ENCODE measurements at regions of chr13 and their contacts with region 1.

Region 1: DNA sequence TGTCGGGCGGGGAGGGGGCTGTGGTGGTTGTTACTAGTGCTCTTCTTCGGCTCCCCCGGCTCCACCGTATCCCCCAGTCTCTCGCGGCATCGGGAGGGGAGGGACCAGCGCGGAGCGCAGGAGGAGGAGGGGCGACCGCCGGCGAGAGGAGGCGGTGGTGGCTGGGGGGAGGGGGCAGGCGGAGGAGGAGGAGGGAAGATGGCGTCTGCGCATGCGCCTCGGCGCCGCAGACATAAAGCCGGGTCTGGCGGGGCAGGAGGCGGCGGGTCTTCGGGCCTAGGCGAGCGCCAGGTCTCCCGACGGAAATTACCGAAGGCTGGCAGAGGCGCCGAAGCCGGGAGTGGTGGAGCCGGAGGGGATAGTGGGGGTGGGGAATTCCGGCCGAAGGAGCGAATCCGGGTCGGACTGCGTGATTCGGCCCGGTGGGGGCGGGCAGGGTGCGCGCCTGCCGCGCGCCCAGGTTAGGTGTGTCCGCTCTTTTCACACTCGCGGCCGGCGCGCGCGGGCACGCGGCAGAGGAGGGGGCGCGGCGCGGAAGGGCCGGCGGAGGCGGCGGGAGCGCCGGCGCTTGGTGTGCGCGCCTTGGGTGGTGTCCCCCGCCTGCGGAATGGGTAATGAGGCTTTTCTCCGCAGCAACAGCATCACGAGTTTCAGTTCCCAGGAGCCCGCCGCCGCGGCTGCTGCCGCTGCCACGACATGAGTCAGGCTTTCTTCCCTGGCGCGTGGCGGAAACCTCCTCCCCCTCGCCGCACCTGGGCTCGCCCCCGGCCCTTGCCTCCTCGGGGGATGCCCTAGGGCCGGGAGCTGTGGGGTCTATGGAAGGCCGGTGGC is 1.3 kb upstream of the TSC22D1 start:
- DNase-seq: peak; percentile 91 to 95 (median 94)
- ATAC-seq: peak; percentile 85
- H3K4me3 ChIP-seq: peak overlapping the region; percentile 66
- H3K4me3 Mint-ChIP-seq: peak overlapping the region; percentile 78 to 99 (median 93)
- H3K27ac ChIP-seq: peak overlapping the region; percentile 84
- H3K27ac Mint-ChIP-seq: peak overlapping the region; percentile 74 to 95 (median 93)
- H3K4me1 ChIP-seq: peaks cover 16 to 27% of the 10 kb centered on the region in 2 donors
- H3K4me1 Mint-ChIP-seq: peaks cover 31 to 40% (median 38%) of the 10 kb centered on the region in 7 donors
- H3K27me3 ChIP-seq: no peaks in the 10 kb centered on the region
- H3K27me3 Mint-ChIP-seq: peaks cover 0 to 56% (median 0%) of the 10 kb centered on the region in 5 donors

Region 2: DNA sequence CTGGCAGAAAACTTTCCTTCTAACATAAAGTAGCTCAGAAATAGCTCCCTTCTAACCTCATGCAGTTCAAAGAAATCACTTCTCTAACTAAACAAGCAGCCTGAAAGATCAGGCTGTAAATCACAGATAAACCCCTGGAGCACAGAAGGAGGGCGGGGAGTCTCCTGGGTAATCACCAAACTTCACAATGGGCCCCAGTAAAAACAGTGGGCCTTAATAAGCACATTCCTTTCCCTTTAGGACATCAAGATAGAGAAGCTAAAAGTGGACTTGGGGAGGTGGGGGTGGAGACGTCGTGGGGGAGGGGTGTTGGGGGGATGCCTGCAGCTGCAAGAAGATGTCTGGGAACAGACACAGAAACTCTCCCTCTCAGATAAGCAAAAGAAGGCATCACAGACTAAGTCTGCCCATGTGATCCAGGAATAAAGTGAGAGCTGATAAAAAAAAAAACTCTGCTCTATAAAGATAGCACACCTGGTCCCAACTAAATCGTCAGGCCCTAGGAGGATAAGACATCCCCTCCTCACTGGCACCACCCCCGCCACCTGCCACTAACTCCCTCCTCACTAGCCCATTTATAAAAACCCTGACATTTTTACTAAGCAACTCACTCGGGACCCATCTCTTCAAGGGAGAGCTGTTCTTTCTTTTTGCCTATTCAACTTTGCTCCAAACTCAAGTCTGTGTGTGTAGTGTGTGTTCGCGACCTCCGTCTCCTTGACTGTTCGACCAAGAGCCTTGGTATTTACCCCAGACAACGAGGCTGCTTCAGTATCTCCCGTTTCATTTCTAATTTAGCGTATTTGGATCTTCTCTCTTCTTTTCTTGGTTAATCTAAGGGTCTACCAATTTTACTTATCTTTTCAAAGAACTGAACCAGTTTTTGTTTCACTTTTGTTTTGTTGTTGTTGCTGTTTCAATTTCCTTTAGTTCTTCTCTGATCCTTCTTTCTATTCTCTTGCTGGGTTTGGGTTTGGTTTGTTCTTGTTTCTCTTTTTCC is 1522.3 kb before region 1 on chr13:
- CTCF ChIA-PET with region 1: no interaction called
- POLR2A ChIA-PET with region 1: no interaction called
- intact Hi-C with region 1: loop called in 1 of 2 experiments (anchors 10 kb)
- DNase-seq: peak in 7 of 9 donors; percentile 30 to 58 (median 49)
- ATAC-seq: peak; percentile 52
- H3K4me3 ChIP-seq: peak overlapping the region; percentile 62
- H3K4me3 Mint-ChIP-seq: no peak overlapping the region
- H3K27ac ChIP-seq: peak overlapping the region; percentile 78
- H3K27ac Mint-ChIP-seq: no peak overlapping the region
- H3K4me1 ChIP-seq: peaks cover 28 to 43% of the 10 kb centered on the region in 2 donors
- H3K4me1 Mint-ChIP-seq: peaks cover 5 to 38% (median 22%) of the 10 kb centered on the region in 7 donors
- H3K27me3 ChIP-seq: no peaks in the 10 kb centered on the region
- H3K27me3 Mint-ChIP-seq: no peaks in the 10 kb centered on the region

Region 3: DNA sequence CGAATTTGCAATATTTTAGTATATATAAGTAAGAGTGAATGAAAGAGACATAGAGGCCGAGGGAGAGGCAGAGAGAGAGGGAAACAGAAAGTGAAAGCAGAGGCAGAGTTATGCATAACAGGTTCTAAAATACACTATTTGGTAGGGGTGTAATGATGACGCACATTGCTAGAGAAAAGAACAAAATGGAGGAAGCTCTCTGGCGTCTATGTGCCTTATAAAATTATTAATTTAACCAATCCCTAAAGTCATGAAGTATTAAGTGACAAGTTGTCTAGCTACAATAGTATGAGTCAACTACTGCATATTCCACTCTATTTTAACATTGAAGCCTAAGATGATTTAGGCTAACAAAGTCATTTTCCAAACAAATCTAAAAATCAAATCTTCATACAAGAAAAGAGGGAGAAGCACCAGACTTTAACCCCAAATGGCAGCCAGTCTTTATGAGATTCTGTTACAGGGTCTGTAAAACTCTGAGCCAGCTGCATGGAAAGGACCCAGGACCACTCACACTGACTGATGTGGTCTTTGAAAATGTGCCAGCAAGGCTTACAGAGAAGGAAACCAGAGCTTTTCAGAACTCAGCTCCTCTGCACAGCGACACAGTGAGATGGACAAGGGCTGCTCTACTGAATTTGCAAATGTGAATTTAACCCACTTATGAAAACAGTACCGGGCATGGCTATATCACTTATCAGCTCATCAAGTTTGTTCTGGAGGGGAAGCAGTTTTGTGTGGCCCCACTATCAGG is 302.8 kb before region 1 on chr13:
- CTCF ChIA-PET with region 1: no interaction called
- POLR2A ChIA-PET with region 1: no interaction called
- intact Hi-C with region 1: loop called (anchors 5 kb)
- DNase-seq: peak in 7 of 9 donors; percentile 69 to 85 (median 82)
- ATAC-seq: peak; percentile 96
- H3K4me3 ChIP-seq: peak overlapping the region; percentile 49
- H3K4me3 Mint-ChIP-seq: peak overlapping the region; percentile 66 to 81 (median 78)
- H3K27ac ChIP-seq: peak overlapping the region; percentile 73
- H3K27ac Mint-ChIP-seq: peak overlapping the region; percentile 90 to 99 (median 96)
- H3K4me1 ChIP-seq: peaks cover 15 to 26% of the 10 kb centered on the region in 2 donors
- H3K4me1 Mint-ChIP-seq: peaks cover 18 to 71% (median 51%) of the 10 kb centered on the region in 7 donors
- H3K27me3 ChIP-seq: no peaks in the 10 kb centered on the region
- H3K27me3 Mint-ChIP-seq: no peaks in the 10 kb centered on the region

Region 4: DNA sequence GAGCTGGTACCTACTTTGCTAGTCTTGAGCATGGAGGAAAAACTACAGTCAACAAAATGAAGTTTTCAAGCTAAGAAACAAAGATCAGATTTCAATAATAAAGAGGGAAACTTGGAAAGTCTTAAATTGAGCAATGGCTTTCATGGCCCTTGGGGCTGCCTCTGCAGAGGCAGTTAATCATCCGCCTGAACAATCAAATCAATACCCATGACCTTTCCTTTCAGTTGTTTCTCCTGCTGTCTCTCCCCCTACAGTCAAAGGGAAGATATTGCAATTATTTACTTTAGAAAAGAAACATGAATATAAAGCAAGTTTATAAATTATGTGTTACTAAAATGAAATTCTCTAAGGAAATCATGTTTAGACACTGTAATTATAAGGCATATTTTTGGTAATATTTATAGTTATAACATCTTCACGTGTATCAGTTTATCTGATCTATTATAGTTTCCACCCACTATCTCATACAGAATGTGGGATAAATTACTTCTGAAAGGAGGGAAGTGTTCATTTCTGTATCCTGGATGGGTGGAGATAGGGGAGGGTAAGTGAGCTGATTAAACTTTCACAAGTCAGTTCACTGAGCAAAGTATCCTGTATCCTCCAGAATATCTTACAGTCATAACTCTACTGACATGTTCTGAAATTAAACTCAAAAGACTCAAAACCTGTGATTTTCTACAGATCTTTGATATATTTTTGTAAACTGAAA is 71.1 kb after region 1 on chr13:
- CTCF ChIA-PET with region 1: no interaction called
- POLR2A ChIA-PET with region 1: no interaction called
- intact Hi-C with region 1: loop called in 1 of 2 experiments (anchors 2 kb)
- DNase-seq: peak in 3 of 9 donors; percentile 6 to 15 (median 9)
- ATAC-seq: no peak
- H3K4me3 ChIP-seq: no peak overlapping the region
- H3K4me3 Mint-ChIP-seq: peak overlapping the region in 1 of 10 donors; percentile 18
- H3K27ac ChIP-seq: no peak overlapping the region
- H3K27ac Mint-ChIP-seq: peak overlapping the region in 1 of 9 donors; percentile 86
- H3K4me1 ChIP-seq: no peaks in the 10 kb centered on the region
- H3K4me1 Mint-ChIP-seq: peaks cover 0 to 14% (median 0%) of the 10 kb centered on the region in 7 donors
- H3K27me3 ChIP-seq: no peaks in the 10 kb centered on the region
- H3K27me3 Mint-ChIP-seq: peaks cover 0 to 15% (median 11%) of the 10 kb centered on the region in 5 donors

Region 5: DNA sequence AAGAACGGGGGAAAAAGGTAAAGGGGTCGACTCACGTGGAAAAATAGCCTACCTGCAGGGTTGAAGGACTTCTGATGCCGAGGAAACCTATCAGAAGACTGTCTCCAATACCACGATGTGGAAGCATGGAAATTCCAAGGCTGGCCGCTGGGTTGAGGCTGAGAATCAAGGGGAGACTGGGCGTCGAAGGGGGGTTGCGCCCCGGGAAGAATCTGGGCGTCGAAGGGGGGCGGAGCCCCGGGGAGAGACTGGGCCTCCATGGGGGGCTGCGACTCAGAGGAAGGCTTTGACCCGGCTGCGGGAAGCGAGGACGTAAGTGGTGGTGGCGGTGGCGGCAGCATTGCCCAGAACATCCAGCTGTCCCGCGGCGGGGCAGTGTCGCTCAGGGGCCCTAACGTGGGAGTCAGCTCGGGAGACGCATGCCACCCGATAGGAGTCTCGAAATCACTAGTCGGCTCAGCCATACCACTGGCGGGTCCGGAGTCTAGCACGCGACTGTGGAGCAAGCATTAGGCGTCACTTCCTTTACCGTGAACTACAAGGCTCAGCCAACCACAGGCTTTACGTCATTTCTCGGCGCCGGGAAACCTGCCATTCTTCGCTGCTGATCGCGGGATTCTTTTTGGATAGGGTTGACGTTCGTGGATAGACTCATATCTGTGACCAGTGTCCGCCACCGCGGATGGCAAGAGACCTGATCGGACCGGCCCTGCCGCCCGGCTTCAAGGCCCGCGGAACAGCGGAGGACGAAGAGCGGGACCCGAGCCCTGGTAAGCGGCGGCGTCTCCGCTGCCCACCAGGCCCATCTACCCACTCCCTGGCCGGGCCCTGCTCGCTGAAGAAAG is 411.7 kb after region 1 on chr13 and contains the starts of genes GPALPP1 and NUFIP1:
- CTCF ChIA-PET with region 1: no interaction called
- POLR2A ChIA-PET with region 1: no interaction called
- intact Hi-C with region 1: loop called (anchors 1 kb)
- DNase-seq: peak; percentile 79 to 94 (median 90)
- ATAC-seq: peak; percentile 98
- H3K4me3 ChIP-seq: peak within 1 kb of the TSS; percentile 94
- H3K4me3 Mint-ChIP-seq: peak within 1 kb of the TSS; percentile 96 to 100 (median 98)
- H3K27ac ChIP-seq: peak within 1 kb of the TSS; percentile 95
- H3K27ac Mint-ChIP-seq: peak within 1 kb of the TSS; percentile 91 to 99 (median 98)
- H3K4me1 ChIP-seq: peaks cover 18 to 27% of the 10 kb centered on the region in 2 donors
- H3K4me1 Mint-ChIP-seq: peaks cover 42 to 81% (median 68%) of the 10 kb centered on the region in 7 donors
- H3K27me3 ChIP-seq: no peaks in the 10 kb centered on the region
- H3K27me3 Mint-ChIP-seq: no peaks in the 10 kb centered on the region
- total RNA-seq, gene GPALPP1: 29.7 to 43.1 (median 33.0) TPM
- total RNA-seq, gene NUFIP1: 3.7 to 6.6 (median 5.4) TPM

Region 6: DNA sequence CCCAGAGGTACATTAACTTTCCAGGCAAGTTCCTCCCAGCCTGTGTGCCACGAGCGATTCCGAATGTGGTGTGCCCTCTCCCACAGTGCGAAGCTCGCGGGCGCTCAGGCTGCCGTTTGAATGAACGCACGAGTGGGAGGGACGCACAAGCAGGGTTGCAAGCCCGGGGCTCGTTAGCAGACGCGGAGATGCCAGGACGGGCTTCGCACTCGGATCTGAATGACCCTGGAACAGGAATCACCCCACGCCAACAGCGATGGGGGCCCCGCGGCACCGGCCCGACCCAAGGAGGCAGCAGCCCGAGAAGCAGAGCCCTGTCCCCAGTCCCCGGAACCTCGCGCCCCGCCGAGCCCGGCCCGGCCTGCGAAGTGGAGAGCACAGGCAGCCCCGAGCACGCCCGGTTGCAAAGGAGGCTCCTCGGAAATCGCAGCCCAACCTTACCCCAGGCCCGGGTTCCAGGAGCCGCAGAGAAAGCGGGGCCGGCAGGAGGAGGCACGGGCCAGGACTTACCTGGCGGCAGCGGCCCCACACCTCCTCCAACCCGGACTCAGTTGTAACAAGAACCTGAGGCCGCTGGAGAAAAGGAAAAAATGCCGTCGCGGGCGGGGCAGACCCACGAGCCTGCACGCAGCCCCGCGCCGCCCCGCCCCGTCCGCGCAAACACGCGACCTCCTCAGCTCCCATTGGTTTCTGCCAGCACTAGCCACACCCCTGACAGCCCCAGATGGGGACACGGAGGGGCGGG is 840.5 kb after region 1 on chr13 and contains the start of gene SLC25A30:
- CTCF ChIA-PET with region 1: no interaction called
- POLR2A ChIA-PET with region 1: no interaction called
- intact Hi-C with region 1: loop called in 1 of 2 experiments (anchors 2 kb)
- DNase-seq: peak; percentile 73 to 90 (median 87)
- ATAC-seq: peak; percentile 97
- H3K4me3 ChIP-seq: peak within 1 kb of the TSS; percentile 97
- H3K4me3 Mint-ChIP-seq: peak within 1 kb of the TSS; percentile 90 to 98 (median 96)
- H3K27ac ChIP-seq: peak within 1 kb of the TSS; percentile 79
- H3K27ac Mint-ChIP-seq: peak within 1 kb of the TSS; percentile 92 to 99 (median 96)
- H3K4me1 ChIP-seq: peaks cover 4 to 21% of the 10 kb centered on the region in 2 donors
- H3K4me1 Mint-ChIP-seq: peaks cover 0 to 36% (median 27%) of the 10 kb centered on the region in 7 donors
- H3K27me3 ChIP-seq: no peaks in the 10 kb centered on the region
- H3K27me3 Mint-ChIP-seq: no peaks in the 10 kb centered on the region
- total RNA-seq, gene SLC25A30: 13.3 to 29.4 (median 23.6) TPM

Region 7: DNA sequence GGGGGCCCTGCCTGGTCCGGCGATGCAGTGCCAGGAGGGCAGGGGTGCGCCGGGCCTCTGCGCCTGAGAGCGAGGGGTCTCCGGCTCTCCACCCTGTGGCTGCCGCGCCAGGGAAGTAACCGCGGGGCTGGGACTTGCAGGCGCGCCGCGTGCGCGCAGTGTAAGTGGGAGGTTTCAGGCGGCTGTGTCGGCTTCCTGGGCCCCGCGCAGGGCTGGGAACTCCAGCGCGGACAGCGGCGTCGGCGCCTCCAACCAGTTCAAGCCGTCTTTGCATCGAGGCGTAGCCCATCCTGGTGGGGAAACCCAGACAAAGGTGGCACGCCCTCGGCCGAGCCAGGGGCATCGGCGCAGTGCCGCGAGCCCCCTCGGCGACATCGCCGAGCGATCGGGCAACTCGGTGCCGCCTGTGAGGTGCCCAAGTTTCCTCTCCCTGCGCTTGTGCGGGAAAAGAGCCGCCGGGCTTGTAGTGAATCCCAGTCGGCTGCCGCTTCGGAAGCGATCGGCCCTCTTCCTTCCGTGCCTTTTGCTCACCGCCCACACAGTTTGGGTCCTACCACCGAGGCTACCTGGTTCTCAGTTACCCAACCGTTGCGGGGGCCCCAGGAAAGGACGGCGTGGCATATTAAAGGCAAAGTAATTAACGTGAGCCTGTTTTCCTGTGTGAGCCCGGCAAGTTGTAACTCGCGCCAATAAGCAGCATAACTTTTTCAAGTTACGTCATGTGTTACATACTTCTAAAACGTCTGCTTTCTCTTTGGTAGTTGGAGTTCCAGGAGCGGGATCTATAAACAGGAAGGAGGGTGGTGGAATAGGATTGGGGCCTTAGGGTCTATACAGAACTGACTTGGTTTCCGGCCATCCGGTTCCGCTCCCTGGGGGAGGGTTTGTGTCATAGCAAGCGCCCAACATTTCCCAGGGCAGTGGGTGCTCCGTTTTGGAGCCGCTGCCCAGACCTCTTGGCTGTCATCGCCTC is 1976.7 kb after region 1 on chr13:
- CTCF ChIA-PET with region 1: no interaction called
- POLR2A ChIA-PET with region 1: no interaction called
- intact Hi-C with region 1: loop called in 1 of 2 experiments (anchors 5 kb)
- DNase-seq: peak; percentile 52 to 77 (median 64)
- ATAC-seq: peak; percentile 77
- H3K4me3 ChIP-seq: peak overlapping the region; percentile 90
- H3K4me3 Mint-ChIP-seq: peak overlapping the region; percentile 92 to 99 (median 95)
- H3K27ac ChIP-seq: peak overlapping the region; percentile 82
- H3K27ac Mint-ChIP-seq: peak overlapping the region; percentile 70 to 96 (median 88)
- H3K4me1 ChIP-seq: peaks cover 26 to 29% of the 10 kb centered on the region in 2 donors
- H3K4me1 Mint-ChIP-seq: peaks cover 32 to 61% (median 55%) of the 10 kb centered on the region in 7 donors
- H3K27me3 ChIP-seq: no peaks in the 10 kb centered on the region
- H3K27me3 Mint-ChIP-seq: peaks cover 0 to 5% (median 0%) of the 10 kb centered on the region in 5 donors

Measured in naive thymus-derived CD4-positive, alpha-beta T cell (primary cell).